ENCODE measurements at regions of chr1 and their contacts with region 1.

Region 1: DNA sequence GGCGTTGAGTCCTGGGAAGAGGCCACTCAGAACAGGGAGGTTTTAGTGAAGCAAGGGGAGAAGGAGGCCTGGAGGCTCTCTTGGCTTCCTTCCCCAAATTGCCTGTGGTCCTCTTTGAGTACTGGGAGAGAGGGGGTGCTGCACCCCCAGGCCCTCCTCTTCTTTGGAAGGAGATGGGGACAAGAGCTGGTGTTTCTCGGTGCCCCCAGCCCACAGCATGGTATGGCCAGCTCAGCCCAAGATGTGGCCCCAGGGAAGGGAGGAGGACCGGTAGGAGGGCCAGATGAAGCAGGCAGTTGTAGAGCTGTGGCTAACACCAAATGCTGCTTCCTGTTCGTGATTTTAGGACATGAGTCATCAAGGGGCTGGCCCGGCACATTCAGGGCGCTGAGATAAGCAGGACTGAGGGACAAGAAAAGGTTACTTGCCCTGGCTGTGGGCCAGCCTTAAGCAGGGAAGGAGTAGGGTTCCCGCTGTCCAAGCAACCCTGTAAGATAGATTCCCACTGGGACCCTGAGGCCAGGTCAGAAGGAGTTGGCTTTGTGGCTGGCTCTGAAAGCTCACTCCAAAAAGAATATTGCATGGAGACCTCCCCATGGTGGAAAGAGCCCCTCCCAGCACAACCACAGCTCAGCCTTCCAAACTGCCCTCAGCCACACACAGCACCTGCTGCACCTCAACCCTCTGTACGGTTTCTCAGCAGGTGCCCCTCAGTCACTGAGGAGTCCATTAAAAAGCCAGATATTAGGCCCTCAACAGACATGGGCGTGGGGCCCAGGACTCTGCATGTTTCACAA is 4.9 kb upstream of the TNFRSF1B start:
- DNase-seq: peak; percentile 90
- H3K4me3 Mint-ChIP-seq: peak overlapping the region; percentile 49
- H3K27ac Mint-ChIP-seq: peak overlapping the region; percentile 98
- H3K4me1 Mint-ChIP-seq: peaks cover 86% of the 10 kb centered on the region
- H3K27me3 Mint-ChIP-seq: no peaks in the 10 kb centered on the region

Region 2: DNA sequence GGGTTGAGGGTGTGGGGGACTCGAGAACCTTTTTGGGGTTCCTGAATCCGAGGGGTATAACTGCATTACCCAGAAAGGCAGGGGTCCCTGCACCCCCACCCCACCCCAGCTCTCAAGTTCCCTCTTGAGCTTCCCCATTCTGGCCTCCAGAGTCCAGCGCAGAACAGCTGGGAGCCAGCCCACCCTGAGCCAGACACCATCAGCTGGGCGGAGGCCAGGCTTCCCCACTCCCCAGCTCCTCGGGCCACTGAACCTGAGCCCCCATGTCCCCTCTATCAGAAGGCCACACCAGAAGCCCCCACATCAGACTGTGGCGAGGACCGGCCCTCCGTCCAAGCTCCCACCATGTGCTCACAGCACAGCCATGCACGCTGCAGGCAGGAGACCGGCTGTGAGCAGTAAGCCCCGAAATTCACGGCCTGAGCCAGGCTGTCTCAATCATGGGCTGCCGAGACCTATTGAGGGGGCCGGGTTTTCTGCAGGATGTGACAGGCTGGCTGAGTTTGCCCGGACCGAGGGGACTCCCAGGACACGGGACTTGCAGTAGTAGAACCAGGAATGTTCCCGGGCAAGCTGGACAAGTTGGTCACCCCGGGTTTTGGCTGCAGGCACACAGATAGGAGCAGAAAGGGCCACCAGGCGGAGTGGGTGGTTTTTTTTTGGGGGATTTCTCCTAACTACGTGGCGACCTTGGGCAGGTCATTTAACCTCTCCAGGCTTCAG is 20.6 kb before region 1 on chr1:
- CTCF ChIA-PET with region 1: interaction called, 14 read pairs
- POLR2A ChIA-PET with region 1: interaction called, 918 read pairs
- DNase-seq: no peak
- H3K4me3 Mint-ChIP-seq: no peak overlapping the region
- H3K27ac Mint-ChIP-seq: no peak overlapping the region
- H3K4me1 Mint-ChIP-seq: peaks cover 33% of the 10 kb centered on the region
- H3K27me3 Mint-ChIP-seq: no peaks in the 10 kb centered on the region

Region 3: DNA sequence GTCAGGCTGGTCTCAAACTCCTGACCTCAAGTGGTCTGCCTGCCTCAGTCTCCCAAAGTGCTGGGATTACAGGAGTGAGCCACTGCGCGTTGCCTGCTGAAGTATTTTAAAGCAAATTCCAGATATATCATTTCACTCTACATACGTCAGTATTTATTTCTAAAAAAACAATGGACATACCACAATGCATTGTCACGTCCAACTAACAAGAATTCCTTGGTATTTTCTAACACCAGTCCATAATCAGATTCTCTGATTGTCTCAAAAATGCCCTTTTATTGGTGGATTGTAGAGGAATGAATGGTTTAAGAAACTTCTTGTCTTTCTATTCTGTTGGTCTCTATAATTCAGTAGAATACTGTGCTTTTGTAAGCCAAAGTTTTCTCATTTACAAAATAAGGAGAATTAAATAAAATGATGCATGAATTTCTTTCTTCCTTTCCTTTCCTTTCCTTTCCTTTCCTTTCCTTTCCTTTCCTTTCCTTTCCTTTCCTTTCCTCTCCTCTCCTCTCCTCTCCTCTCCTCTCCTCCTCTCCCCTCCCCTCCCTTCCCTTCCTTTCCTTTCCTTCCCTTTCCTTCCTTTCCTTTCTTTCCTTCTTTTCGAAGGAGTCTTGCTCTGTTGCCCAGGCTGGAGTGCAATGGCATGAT is 123.8 kb after region 1 on chr1:
- CTCF ChIA-PET with region 1: no interaction called
- POLR2A ChIA-PET with region 1: no interaction called
- DNase-seq: no peak
- H3K4me3 Mint-ChIP-seq: no peak overlapping the region
- H3K27ac Mint-ChIP-seq: no peak overlapping the region
- H3K4me1 Mint-ChIP-seq: peaks cover 7% of the 10 kb centered on the region
- H3K27me3 Mint-ChIP-seq: no peaks in the 10 kb centered on the region

Region 4: GRCh38 chr1:12501661-12502060 is 339.8 kb after region 1 on chr1:
- CTCF ChIA-PET with region 1: no interaction called
- POLR2A ChIA-PET with region 1: no interaction called
- DNase-seq: no peak
- H3K4me3 Mint-ChIP-seq: no peak overlapping the region
- H3K27ac Mint-ChIP-seq: no peak overlapping the region
- H3K4me1 Mint-ChIP-seq: peaks cover 20% of the 10 kb centered on the region
- H3K27me3 Mint-ChIP-seq: no peaks in the 10 kb centered on the region

Measured in activated CD4-positive, alpha-beta memory T cell treated with anti-CD3 and anti-CD28 coated beads, Interleukin-2, amount 10 ng/mL, durations not matched to agents 7 days and 5 days (primary cell).